ENCODE measurements at regions of chr6 and their contacts with region 1.

Region 1: DNA sequence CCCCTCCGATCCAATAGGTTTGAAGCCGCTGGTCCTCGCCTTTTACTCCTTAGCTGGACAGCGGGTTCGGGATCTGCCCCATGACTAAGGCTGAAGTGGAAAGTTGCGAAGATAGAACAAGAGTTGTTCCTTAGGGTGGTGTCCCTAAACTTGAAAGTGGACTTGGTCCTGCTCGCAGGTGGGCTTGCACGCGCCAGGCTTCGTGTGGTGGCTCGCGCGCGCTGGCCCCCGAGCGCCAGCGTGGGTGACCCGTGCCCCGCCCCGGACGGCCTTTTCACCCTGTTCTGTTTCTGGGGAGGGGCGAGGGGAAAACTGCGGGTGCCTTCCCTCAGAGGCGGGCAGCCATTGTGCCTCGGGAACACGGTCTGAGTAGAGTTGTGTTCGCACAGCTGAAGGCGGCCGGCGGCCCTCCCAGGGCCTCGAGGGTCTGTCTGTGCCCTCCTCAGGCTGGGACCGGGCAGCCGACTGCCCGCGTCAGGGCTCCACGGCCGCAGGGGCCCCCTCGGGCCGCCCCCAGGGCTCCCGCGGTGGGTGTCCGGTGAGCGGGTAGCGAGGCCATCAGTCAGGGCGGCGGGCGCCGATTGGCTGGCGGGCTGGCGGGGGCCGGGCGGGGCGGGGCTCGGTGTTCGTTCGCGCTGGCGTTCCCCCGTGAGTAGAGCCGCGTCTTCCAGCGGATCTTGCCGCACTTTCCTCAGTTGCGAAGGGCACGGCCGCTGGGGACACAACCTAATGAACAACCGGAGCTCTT is 33.0 kb downstream of the RREB1 start:
- DNase-seq: peak; percentile 80 to 97 (median 90)
- ATAC-seq: peak; percentile 92
- H3K4me3 ChIP-seq: peak overlapping the region; percentile 58 to 60
- H3K27ac ChIP-seq: peak overlapping the region; percentile 96 to 97
- H3K4me1 ChIP-seq: peaks cover 39 to 93% of the 10 kb centered on the region in 2 donors
- H3K27me3 ChIP-seq: no peaks in the 10 kb centered on the region
- CTCF ChIP-seq: no peak

Region 2: DNA sequence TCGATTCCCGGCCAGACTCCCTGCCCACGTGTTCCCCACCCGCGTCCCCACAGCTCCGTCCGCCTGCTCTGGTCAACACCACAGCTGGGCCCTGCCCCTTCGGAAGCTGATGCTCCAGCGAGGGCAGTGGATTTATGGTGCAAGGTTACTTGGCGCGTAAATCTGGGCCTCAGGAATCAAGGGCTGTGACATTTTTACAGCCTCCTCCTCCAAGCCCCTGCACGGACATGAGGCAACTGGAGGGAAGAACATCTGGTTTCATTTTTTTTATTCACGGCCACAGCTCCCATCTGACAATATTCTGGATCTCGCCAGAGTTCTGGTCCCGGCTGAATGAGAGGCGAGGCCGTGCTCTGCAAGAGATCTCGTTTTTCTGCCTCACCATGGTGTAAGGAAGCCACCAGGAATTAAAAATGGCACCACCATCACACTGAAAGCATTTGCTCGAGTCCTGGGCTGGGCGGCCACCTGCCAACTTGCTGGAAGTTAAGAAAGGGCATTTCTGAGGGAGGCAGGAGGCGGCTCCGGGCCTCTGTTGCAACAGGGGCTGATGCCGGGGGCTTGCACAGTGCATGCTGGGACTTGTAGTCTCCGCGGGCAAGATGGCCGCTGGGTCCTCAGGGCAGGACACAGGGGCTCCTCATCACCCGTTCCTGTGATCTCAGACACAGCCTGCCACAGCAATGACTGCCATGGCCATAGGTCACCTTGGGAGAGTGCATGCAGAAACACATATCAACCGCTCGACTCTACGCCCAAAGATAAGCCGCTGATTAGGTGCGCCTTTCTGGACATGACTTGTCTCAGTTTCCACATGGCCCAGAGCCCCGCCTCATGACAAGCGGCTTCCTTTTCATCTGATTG is 403.8 kb before region 1 on chr6:
- intact Hi-C with region 1: no loop called
- DNase-seq: peak in 3 of 4 donors; percentile 62 to 82 (median 63)
- ATAC-seq: peak; percentile 45
- H3K4me3 ChIP-seq: peak overlapping the region; percentile 18 to 21
- H3K27ac ChIP-seq: no peak overlapping the region
- H3K4me1 ChIP-seq: peaks cover 0 to 3% of the 10 kb centered on the region in 2 donors
- H3K27me3 ChIP-seq: no peaks in the 10 kb centered on the region
- CTCF ChIP-seq: no peak

Region 3: GRCh38 chr6:7025861-7026260 is 114.9 kb before region 1 on chr6:
- intact Hi-C with region 1: no loop called
- DNase-seq: no peak
- ATAC-seq: no peak
- H3K4me3 ChIP-seq: no peak overlapping the region
- H3K27ac ChIP-seq: no peak overlapping the region
- H3K4me1 ChIP-seq: peaks cover 0 to 5% of the 10 kb centered on the region in 2 donors
- H3K27me3 ChIP-seq: no peaks in the 10 kb centered on the region
- CTCF ChIP-seq: no peak

Region 4: GRCh38 chr6:7769702-7770101 is 628.9 kb after region 1 on chr6:
- intact Hi-C with region 1: loop called in 1 of 2 experiments (anchors 10 kb)
- DNase-seq: no peak
- ATAC-seq: no peak
- H3K4me3 ChIP-seq: no peak overlapping the region
- H3K27ac ChIP-seq: no peak overlapping the region
- H3K4me1 ChIP-seq: no peaks in the 10 kb centered on the region
- H3K27me3 ChIP-seq: no peaks in the 10 kb centered on the region
- CTCF ChIP-seq: no peak